ENCODE measurements at regions of chr2 and their contacts with region 1.

Region 1: GRCh38 chr2:190088917-190089316 is 26.4 kb upstream of the MSTN start:
- DNase-seq: peak; percentile 20
- ATAC-seq: peak; percentile 91
- H3K4me3 ChIP-seq: no peak overlapping the region
- H3K27ac ChIP-seq: no peak overlapping the region
- H3K4me1 ChIP-seq: no peaks in the 10 kb centered on the region
- H3K27me3 ChIP-seq: no peaks in the 10 kb centered on the region
- CTCF ChIP-seq: peak; percentile 60 to 82 (median 63); a peak in 5 of 6 replicates
- EP300 ChIP-seq: no peak
- POLR2A ChIP-seq: no peak
- RAD21 ChIP-seq: peak; percentile 93

Region 2: DNA sequence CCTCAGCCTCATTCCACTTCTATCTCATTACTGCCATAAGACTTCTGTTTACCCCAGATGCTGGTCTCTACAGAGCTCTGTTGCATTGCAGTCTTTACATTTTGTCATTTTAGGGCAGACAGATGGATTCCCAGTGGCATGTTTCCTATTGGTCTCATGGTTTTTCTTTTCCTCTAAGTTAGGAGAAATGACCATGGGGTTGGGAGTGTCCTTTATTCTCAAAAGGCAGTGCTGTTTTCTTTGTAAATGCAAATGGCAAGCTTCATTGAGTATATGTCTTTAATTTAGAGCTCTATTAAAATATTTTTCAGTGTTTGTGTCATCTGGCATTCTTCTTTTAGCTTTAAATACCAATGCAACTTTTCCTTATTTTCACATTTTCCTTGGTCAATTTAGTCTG is 83.4 kb before region 1 on chr2:
- CTCF ChIA-PET with region 1: no interaction called
- POLR2A ChIA-PET with region 1: no interaction called
- RAD21 ChIA-PET with region 1: no interaction called
- SMC1A ChIA-PET with region 1: no interaction called
- in situ Hi-C with region 1: no loop called
- intact Hi-C with region 1: no loop called
- DNase-seq: no peak
- ATAC-seq: no peak
- H3K4me3 ChIP-seq: no peak overlapping the region
- H3K27ac ChIP-seq: no peak overlapping the region
- H3K4me1 ChIP-seq: no peaks in the 10 kb centered on the region
- H3K27me3 ChIP-seq: no peaks in the 10 kb centered on the region
- CTCF ChIP-seq: no peak
- EP300 ChIP-seq: no peak
- POLR2A ChIP-seq: no peak
- RAD21 ChIP-seq: no peak

Region 3: DNA sequence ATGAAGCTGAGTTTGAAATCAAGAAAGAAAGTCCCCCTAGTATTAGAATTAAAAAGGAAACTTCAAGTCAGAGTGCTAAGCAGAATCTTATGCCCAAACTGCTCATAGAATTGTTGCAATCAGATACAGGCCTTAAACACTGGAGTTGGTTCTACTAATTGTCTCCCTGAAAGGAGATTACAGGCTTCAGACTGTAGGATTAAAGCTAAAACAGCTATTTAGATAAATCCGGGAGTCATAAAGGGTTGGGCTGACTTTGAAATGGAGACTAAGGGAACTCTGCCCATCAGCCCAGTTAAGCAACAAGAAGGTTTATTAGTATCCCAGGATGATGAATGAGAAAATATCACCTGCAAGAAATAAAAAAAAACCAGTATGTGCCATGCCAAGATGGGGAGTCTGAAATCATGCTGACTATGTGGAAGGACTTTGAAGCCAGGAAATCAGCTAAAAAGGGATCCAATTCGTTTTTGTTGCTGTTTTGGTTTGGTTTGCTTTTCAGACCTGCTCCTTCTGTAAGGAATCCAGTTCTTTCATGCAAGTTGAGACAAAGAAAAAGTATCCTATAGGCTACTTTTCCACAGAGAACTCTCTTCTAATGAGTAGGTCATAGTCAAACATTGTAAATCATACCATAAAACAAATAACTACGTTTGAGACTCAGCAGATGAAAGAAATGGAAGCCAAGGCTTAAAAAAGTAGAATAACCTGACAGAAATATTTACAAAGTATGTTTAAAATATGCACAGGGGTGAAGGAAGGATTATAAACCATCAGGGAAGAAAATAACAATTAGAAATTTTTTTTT is 11.2 kb after region 1 on chr2:
- CTCF ChIA-PET with region 1: interaction called, 26 read pairs
- POLR2A ChIA-PET with region 1: no interaction called
- RAD21 ChIA-PET with region 1: interaction called, 7 read pairs
- SMC1A ChIA-PET with region 1: interaction called, 6 read pairs
- in situ Hi-C with region 1: no loop called
- intact Hi-C with region 1: no loop called
- DNase-seq: no peak
- ATAC-seq: no peak
- H3K4me3 ChIP-seq: no peak overlapping the region
- H3K27ac ChIP-seq: no peak overlapping the region
- H3K4me1 ChIP-seq: no peaks in the 10 kb centered on the region
- H3K27me3 ChIP-seq: no peaks in the 10 kb centered on the region
- CTCF ChIP-seq: no peak
- EP300 ChIP-seq: no peak
- POLR2A ChIP-seq: no peak
- RAD21 ChIP-seq: no peak

Region 4: DNA sequence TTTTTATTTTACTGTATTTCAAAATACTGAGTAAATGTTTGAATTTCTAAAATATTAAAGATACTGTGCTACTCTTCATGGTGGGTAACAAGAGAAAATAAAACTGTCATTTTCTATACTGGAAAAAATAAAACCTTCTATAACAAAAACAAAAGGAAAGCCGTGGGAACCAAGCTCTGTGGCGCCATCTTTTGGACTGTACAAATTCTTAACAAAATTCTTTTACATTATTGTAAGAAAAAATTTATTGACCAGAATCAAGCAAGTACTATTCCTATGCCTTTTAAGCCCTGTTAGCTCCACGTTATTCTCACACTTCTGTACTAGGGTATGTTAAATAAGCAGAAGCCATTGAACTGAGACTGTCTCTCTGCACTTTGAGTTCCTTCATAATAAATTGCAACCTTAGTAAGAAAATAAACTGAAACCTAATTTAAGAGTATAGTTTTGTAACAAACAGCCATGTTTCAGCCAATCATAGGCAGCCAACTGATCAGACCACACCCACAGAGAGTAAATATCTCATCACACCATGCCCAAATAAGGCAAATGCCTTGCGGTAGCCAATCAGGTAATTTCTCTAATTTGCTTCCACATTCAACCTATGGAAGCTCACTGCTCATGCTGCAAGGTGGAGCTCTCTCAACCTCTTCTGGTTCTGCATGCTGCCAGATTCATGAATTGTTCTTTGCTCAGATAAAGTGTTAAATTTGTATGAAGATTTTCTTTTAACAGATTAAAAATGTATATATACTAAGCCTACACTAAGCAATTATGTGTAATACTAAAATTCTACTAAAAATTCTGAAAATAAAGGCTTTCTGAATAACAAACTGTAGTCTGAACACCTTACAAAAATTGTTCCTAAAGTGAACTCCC is 188.6 kb after region 1 on chr2:
- CTCF ChIA-PET with region 1: interaction called, 79 read pairs
- POLR2A ChIA-PET with region 1: no interaction called
- RAD21 ChIA-PET with region 1: interaction called, 16 read pairs
- SMC1A ChIA-PET with region 1: interaction called, 44 read pairs
- in situ Hi-C with region 1: loop called (anchors 5 kb)
- intact Hi-C with region 1: loop called (anchors 1 kb)
- DNase-seq: no peak
- ATAC-seq: peak; percentile 89
- H3K4me3 ChIP-seq: no peak overlapping the region
- H3K27ac ChIP-seq: no peak overlapping the region
- H3K4me1 ChIP-seq: no peaks in the 10 kb centered on the region
- H3K27me3 ChIP-seq: no peaks in the 10 kb centered on the region
- CTCF ChIP-seq: peak in 2 of 3 experiments; percentile 12 to 39; a peak in 3 of 6 replicates
- EP300 ChIP-seq: no peak
- POLR2A ChIP-seq: no peak
- RAD21 ChIP-seq: peak; percentile 57

Region 5: DNA sequence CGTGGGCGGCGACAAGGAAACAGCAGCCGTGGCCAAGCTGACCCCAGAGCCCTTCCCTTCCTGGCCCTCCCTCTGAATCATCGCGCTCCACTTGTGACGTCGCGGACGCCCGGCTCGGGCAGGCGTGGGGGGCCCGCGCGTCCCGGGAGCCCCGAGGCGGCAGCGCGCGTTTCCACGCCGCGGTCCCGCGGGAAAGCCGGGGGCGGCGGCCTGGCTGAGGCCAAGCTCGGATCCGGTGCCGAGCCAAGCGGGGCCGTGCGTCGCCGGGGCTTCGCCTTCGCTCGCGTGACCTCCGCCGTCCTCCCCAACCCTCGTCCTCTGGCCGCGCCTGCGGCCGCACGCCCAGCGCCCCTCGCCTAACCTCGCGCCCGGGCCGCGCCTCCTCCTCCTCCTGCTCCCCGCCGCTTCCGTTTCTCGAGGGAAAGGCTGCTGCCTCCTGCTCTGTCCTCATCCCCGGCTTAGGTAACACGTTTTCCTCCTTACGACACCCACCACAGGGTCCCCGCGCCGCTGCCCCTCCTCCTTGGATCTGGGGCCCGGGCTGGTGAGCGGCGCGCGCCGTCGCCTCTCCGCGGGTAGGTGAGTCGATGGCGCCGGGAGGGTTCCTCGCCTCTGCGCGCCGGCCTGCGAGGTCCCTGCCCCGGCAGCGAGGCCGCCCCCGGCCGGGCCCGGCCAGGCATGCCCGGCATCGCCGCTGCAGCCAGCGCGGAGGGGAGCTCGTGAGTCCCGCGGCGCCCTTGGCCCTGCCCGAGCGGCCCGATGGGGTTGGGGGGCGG is 254.8 kb after region 1 on chr2 and contains the start of gene INPP1:
- CTCF ChIA-PET with region 1: interaction called, 10 read pairs
- POLR2A ChIA-PET with region 1: no interaction called
- RAD21 ChIA-PET with region 1: interaction called, 6 read pairs
- SMC1A ChIA-PET with region 1: interaction called, 3 read pairs
- in situ Hi-C with region 1: no loop called
- intact Hi-C with region 1: no loop called
- DNase-seq: no peak
- ATAC-seq: peak; percentile 83
- H3K4me3 ChIP-seq: peak within 1 kb of the TSS; percentile 77
- H3K27ac ChIP-seq: peak within 1 kb of the TSS; percentile 44; the same call in 1 of the 2 replicates
- H3K4me1 ChIP-seq: peaks cover 8% of the 10 kb centered on the region; the same call in 1 of the 2 replicates
- H3K27me3 ChIP-seq: no peaks in the 10 kb centered on the region
- CTCF ChIP-seq: no peak
- EP300 ChIP-seq: 0 out of 4 replicates have a peak, but pooled peaks of 1 of the 2 experiments have one; percentile 17
- POLR2A ChIP-seq: peak; percentile 53
- RAD21 ChIP-seq: no peak
- polyA plus RNA-seq, gene INPP1: 3.3 to 8.9 TPM

Region 6: GRCh38 chr2:190376591-190377245 is 287.8 kb after region 1 on chr2:
- CTCF ChIA-PET with region 1: interaction called, 13 read pairs
- POLR2A ChIA-PET with region 1: no interaction called
- RAD21 ChIA-PET with region 1: no interaction called
- SMC1A ChIA-PET with region 1: interaction called, 8 read pairs
- in situ Hi-C with region 1: loop called (anchors 5 kb)
- intact Hi-C with region 1: loop called (anchors 1 kb)
- DNase-seq: no peak
- ATAC-seq: no peak
- H3K4me3 ChIP-seq: no peak overlapping the region
- H3K27ac ChIP-seq: no peak overlapping the region
- H3K4me1 ChIP-seq: no peaks in the 10 kb centered on the region
- H3K27me3 ChIP-seq: no peaks in the 10 kb centered on the region
- CTCF ChIP-seq: no peak
- EP300 ChIP-seq: no peak
- POLR2A ChIP-seq: no peak
- RAD21 ChIP-seq: no peak

Measured in GM12878 (cell line).